PC-9 (cell line): ENCODE measurements at regions of chr1 and their contacts with region 1.

Region 1: DNA sequence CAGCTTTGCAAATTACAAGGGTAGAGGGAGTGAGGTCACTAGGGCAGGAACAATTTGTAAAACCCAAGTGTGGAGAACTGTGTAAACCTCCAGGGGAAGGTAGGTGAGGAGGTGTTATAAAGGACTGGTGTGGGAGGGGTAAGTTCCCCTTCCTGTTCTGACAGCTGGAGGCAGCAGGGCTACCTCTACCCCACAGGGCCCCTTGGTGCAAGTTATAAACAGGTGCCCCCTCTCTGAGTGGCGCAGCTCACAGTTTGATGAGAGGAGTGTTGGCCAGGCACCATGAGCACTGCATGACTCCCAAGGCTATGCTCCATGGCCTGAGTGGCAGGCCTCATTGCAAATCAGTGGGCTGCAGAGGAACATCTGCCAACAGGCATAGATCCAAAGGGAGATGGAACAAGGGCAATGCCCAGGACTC is 41.0 kb downstream of the MFSD2A start:
- DNase-seq: no peak
- H3K4me3 ChIP-seq: no peak overlapping the region
- H3K27ac ChIP-seq: no peak overlapping the region
- H3K4me1 ChIP-seq: peaks cover 2% of the 10 kb centered on the region
- H3K27me3 ChIP-seq: no peaks in the 10 kb centered on the region
- CTCF ChIP-seq: no peak

Region 2: GRCh38 chr1:39973503-39974135 is 22.4 kb before region 1 on chr1:
- CTCF ChIA-PET with region 1: no interaction called
- POLR2A ChIA-PET with region 1: interaction called, 19 read pairs
- intact Hi-C with region 1: no loop called
- DNase-seq: peak; percentile 42 to 69
- H3K4me3 ChIP-seq: no peak overlapping the region
- H3K27ac ChIP-seq: no peak overlapping the region
- H3K4me1 ChIP-seq: no peaks in the 10 kb centered on the region; the same call in 1 of the 2 replicates
- H3K27me3 ChIP-seq: no peaks in the 10 kb centered on the region
- CTCF ChIP-seq: peak; percentile 98